Heart right ventricle (tissue), 16 donors: ENCODE measurements at regions of chr2 and their contacts with region 1.

Region 1: GRCh38 chr2:130342533-130343275 is at the start of gene IMP4:
- DNase-seq: peak; percentile 89 to 99
- ATAC-seq: peak; percentile 97 to 98 (median 98)
- H3K4me3 ChIP-seq: peak within 1 kb of the TSS; percentile 49 to 96 (median 77)
- H3K27ac ChIP-seq: peak within 1 kb of the TSS; percentile 69 to 97 (median 92)
- H3K4me1 ChIP-seq: peaks cover 3 to 29% (median 16%) of the 10 kb centered on the region in 9 donors
- H3K27me3 ChIP-seq: no peaks in the 10 kb centered on the region
- CTCF ChIP-seq: peak in 6 of 9 donors; percentile 26 to 65 (median 54)
- total RNA-seq, gene IMP4: 50.6 to 82.0 (median 61.6) TPM

Region 2: GRCh38 chr2:129877289-129877779 is 465.4 kb before region 1 on chr2:
- intact Hi-C with region 1: loop called in 1 of 10 experiments (anchors 5 kb)
- DNase-seq: peak; percentile 93 to 95
- ATAC-seq: peak; percentile 92 to 96 (median 96)
- H3K4me3 ChIP-seq: peak overlapping the region; percentile 57 to 86 (median 70)
- H3K27ac ChIP-seq: peak overlapping the region in 9 of 10 donors; percentile 63 to 87 (median 72)
- H3K4me1 ChIP-seq: peaks cover 2 to 16% (median 12%) of the 10 kb centered on the region in 9 donors
- H3K27me3 ChIP-seq: no peaks in the 10 kb centered on the region
- CTCF ChIP-seq: no peak

Region 3: GRCh38 chr2:130181325-130181879 is 161.3 kb before region 1 on chr2 and contains the start of gene SMPD4:
- intact Hi-C with region 1: loop called in 5 of 10 experiments (anchors 5 to 10 kb)
- DNase-seq: peak; percentile 98 to 99
- ATAC-seq: peak; percentile 90 to 98 (median 94)
- H3K4me3 ChIP-seq: peak within 1 kb of the TSS; percentile 77 to 99 (median 94)
- H3K27ac ChIP-seq: peak within 1 kb of the TSS; percentile 77 to 98 (median 92)
- H3K4me1 ChIP-seq: peaks cover 11 to 29% (median 23%) of the 10 kb centered on the region in 9 donors
- H3K27me3 ChIP-seq: no peaks in the 10 kb centered on the region
- CTCF ChIP-seq: no peak
- total RNA-seq, gene SMPD4: 21.9 to 33.6 (median 25.9) TPM

Region 4: DNA sequence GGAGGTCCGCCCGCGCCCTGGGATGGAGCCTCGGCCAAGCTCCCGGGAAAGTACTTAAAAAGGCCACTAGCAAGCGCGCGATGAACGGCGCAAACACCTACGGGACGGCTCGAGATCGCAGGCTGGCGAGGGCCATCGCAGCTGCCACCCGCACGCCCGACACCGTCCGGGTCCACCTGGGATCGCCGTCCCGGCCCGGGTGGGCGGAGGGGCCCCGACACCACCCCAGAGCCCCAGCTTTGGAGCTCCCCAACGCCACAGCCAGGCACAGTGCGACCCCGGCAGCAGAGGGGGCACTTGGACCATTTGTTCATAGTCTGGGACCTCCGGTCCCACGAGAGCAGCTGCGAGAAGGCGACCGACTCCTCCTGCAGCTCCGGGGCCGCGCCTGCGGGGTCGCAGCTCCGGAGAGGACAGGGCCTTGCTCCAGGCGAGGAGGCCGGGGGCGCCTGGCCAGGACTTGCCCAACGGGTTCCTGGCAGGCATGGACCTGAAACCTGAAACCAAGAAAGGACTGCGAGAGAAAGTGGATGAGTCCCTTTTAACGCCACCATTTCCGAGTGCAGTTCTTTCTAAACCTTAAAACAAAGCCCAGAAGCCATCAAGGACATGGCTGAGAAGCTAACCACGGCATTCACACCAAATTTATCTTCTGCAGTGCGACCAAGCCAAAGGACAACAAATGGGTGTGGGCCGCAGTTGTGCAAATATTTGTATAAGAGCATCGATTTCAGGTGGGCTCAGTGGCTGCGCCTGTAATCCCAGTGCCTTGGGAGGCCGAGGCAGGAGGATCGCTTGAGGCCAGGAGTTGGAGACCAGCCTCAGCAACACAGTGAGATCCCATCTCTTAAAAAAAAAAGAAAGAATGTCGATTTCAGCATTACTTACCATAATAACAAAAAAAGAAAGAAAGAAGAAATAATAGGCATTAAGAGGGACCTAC is 54.0 kb before region 1 on chr2:
- intact Hi-C with region 1: no loop called
- DNase-seq: no peak
- ATAC-seq: no peak
- H3K4me3 ChIP-seq: no peak overlapping the region
- H3K27ac ChIP-seq: no peak overlapping the region
- H3K4me1 ChIP-seq: no peaks in the 10 kb centered on the region
- H3K27me3 ChIP-seq: peaks cover 0 to 16% (median 0%) of the 10 kb centered on the region in 7 donors
- CTCF ChIP-seq: peak in 1 of 9 donors; percentile 17

Region 5: DNA sequence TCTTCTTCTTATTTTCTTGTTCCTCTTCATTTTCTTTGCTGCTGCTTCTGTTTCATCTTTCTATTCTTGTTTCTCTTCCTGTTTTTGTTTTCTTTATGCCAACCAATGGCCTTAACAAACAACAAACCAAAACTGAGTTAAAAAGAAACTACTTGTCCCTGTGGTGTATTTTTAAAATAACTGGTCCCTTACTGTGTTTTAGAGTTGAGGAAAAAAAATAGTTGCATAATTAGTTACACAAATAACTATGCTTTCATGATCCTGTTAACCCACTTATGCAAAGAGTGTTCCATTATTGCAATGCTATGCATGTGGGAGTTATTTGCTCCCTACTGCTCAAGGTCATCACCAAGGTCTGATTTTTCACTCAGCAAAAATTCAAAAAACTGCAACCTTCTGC is 39.5 kb before region 1 on chr2:
- intact Hi-C with region 1: no loop called
- DNase-seq: no peak
- ATAC-seq: no peak
- H3K4me3 ChIP-seq: no peak overlapping the region
- H3K27ac ChIP-seq: no peak overlapping the region
- H3K4me1 ChIP-seq: no peaks in the 10 kb centered on the region
- H3K27me3 ChIP-seq: peaks cover 0 to 18% (median 5%) of the 10 kb centered on the region in 7 donors
- CTCF ChIP-seq: no peak

Region 6: DNA sequence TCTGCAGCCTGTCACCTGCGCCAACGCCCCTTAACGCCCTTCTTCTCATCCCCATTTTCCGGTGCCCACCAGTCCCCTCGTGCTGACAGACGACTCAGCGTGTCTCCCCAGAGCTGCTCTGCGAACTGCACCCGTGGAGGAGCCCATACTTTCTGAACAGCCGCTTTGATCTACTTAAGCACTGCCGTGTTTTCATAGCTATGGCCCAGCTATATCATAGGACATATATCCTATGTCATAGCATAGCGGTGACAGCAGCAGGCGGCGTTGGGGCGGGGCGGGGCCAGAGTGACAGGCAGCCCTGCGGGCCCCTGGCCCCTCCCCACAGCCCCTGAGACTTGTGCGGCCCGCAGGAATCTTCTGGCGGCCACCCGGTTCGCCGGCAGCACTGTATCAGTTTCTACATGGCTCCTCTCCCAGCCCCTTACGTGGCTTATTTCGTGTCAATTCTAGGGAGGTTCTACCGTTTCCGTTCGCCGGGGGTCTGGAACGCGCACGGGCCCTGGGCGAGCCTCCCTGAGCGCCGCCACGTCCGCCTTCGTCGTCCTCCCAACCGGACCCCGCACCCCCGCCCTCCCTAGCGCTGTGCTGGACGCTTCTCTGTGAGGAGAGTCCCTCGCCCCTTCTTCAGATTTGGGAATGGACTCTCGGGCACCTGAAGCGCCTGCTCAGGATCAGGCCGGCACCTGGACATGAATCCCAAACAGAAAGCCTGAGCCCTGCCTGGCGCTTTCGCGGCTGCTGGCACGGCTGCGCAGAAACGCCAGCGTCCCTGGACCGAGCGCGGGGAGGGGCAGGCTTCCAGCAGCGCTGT is 48.6 kb after region 1 on chr2:
- intact Hi-C with region 1: loop called in 1 of 10 experiments (anchors 1 kb)
- DNase-seq: peak; percentile 76 to 86
- ATAC-seq: peak; percentile 84 to 93 (median 89)
- H3K4me3 ChIP-seq: peak overlapping the region; percentile 45 to 81 (median 68)
- H3K27ac ChIP-seq: peak overlapping the region; percentile 80 to 94 (median 89)
- H3K4me1 ChIP-seq: peaks cover 6 to 54% (median 43%) of the 10 kb centered on the region in 9 donors
- H3K27me3 ChIP-seq: no peaks in the 10 kb centered on the region
- CTCF ChIP-seq: no peak